Activated B cell treated with CpG ODN at 0.5 μM for 24 hours (primary cell): ENCODE measurements at regions of chr11 and their contacts with region 1.

Region 1: GRCh38 chr11:117715801-117716200 is 81.2 kb downstream of the DSCAML1 start:
- DNase-seq: no peak
- ATAC-seq: no peak
- H3K4me3 Mint-ChIP-seq: no peak overlapping the region
- H3K27ac Mint-ChIP-seq: no peak overlapping the region
- H3K4me1 Mint-ChIP-seq: no peaks in the 10 kb centered on the region
- H3K27me3 Mint-ChIP-seq: peaks cover 39% of the 10 kb centered on the region
- CTCF ChIP-seq: no peak

Region 2: DNA sequence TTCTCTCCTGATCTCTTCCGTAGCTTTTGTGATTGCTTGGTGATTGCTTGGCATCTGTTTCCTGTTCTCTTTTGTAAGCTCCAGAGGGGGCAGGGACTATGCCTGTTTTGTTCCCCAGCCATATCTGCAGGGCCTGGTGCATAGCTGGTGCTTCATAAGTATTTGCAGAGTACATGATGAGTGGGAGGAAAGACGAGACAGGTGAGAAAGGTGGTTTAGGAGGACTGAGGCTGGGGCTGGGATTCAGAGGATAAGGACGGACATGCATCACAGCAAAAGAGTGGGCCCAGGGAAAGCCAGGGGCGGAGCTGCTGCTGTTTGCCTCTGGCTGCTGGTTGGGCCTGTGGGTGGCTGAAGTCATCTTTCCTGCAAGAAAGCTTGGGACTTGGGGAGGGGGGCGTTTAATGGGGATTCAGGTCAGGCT is 18.8 kb after region 1 on chr11:
- CTCF ChIA-PET with region 1: no interaction called
- POLR2A ChIA-PET with region 1: no interaction called
- intact Hi-C with region 1: loop called (anchors 2 kb)
- DNase-seq: no peak
- ATAC-seq: no peak
- H3K4me3 Mint-ChIP-seq: no peak overlapping the region
- H3K27ac Mint-ChIP-seq: no peak overlapping the region
- H3K4me1 Mint-ChIP-seq: no peaks in the 10 kb centered on the region
- H3K27me3 Mint-ChIP-seq: peaks cover 31% of the 10 kb centered on the region
- CTCF ChIP-seq: no peak

Region 3: DNA sequence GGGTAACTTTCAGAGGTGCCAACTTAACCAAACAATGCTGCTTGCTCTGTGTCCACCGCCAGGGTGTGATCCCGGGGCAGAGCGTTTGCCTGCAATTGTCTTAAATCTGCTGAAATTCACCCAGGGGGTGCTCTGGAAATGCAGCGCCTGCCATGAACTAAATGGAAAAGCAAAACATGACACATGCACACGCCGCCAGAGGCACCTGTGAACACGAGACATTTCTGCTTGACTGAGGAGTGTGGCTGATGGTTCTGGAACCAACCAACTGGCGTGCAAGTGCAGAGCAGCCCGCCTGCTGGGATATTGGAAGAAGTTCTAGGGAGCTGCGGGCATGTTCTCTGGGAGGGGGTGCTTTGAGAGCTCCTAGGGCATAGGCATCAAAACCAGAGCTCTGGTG is 50.8 kb after region 1 on chr11:
- CTCF ChIA-PET with region 1: no interaction called
- POLR2A ChIA-PET with region 1: no interaction called
- intact Hi-C with region 1: no loop called
- DNase-seq: no peak
- ATAC-seq: no peak
- H3K4me3 Mint-ChIP-seq: no peak overlapping the region
- H3K27ac Mint-ChIP-seq: no peak overlapping the region
- H3K4me1 Mint-ChIP-seq: no peaks in the 10 kb centered on the region
- H3K27me3 Mint-ChIP-seq: peaks cover 11% of the 10 kb centered on the region
- CTCF ChIP-seq: no peak